Calu3 (cell line): ENCODE measurements at regions of chr7 and their contacts with region 1.

Region 1: GRCh38 chr7:8084836-8085235 is 116.2 kb downstream of the GLCCI1 start:
- DNase-seq: no peak
- H3K4me3 Mint-ChIP-seq: no peak overlapping the region
- H3K27ac Mint-ChIP-seq: no peak overlapping the region
- H3K4me1 Mint-ChIP-seq: no peaks in the 10 kb centered on the region
- H3K27me3 Mint-ChIP-seq: no peaks in the 10 kb centered on the region
- CTCF ChIP-seq: no peak

Region 2: DNA sequence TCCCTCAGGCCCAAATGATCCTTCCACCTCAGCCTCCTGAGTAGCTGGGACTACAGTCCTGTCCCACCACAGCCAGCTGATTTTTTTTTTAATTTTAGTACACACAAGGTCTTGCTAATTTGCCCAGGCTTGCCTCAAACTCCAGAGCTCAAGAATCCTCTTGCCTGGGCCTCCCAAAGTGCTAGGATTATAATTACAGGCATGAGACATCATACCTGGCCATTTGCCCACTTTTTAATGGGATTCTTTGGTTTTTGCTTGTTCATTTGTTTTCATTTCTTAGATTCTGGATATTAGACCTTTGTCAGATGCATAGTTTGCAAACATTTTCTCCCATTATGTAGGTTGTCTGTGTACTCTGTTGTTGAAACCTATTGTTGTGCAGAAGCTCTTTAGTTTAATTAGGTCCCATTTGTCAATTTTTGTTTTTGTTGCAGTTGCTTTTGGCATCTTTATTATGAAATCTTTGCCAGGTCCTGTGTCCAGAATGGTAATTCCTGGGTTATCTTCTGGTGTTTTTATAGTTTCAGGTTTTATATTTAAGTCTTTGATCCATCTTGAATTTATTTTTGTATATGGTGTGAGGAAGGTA is 21.0 kb before region 1 on chr7:
- CTCF ChIA-PET with region 1: interaction called, 13 read pairs
- intact Hi-C with region 1: no loop called
- DNase-seq: no peak
- H3K4me3 Mint-ChIP-seq: no peak overlapping the region
- H3K27ac Mint-ChIP-seq: no peak overlapping the region
- H3K4me1 Mint-ChIP-seq: no peaks in the 10 kb centered on the region
- H3K27me3 Mint-ChIP-seq: no peaks in the 10 kb centered on the region
- CTCF ChIP-seq: no peak

Region 3: GRCh38 chr7:9324513-9324912 is 1239.7 kb after region 1 on chr7:
- CTCF ChIA-PET with region 1: no interaction called
- intact Hi-C with region 1: loop called (anchors 5 kb)
- DNase-seq: no peak
- H3K4me3 Mint-ChIP-seq: no peak overlapping the region
- H3K27ac Mint-ChIP-seq: no peak overlapping the region
- H3K4me1 Mint-ChIP-seq: no peaks in the 10 kb centered on the region
- H3K27me3 Mint-ChIP-seq: no peaks in the 10 kb centered on the region
- CTCF ChIP-seq: no peak